ENCODE measurements at regions of chr14 and their contacts with region 1.

Region 1: DNA sequence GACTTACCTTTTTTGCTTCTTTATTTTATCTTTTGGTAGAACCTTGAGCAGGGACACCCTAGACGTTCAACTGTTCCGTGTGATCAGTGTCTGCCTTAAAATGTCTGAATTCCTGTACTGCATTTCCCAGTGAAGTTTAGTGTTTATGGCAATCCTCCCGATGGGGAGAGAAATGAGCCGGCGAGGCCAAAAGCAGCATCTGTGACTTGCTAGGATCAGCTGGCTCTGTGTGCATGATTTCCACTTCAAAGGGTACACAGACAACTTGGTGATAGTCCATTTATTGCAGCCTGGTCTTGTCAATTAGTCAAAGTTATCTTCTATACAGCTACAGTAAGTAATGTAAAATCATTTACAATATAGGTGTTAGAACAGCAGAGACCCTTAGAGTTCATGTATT is 768.5 kb downstream of the DIO2 start:
- DNase-seq: no peak
- H3K4me3 ChIP-seq: no peak overlapping the region
- H3K27ac ChIP-seq: no peak overlapping the region
- H3K4me1 ChIP-seq: no peaks in the 10 kb centered on the region
- H3K27me3 ChIP-seq: peaks cover 15% of the 10 kb centered on the region
- CTCF ChIP-seq: no peak

Region 2: DNA sequence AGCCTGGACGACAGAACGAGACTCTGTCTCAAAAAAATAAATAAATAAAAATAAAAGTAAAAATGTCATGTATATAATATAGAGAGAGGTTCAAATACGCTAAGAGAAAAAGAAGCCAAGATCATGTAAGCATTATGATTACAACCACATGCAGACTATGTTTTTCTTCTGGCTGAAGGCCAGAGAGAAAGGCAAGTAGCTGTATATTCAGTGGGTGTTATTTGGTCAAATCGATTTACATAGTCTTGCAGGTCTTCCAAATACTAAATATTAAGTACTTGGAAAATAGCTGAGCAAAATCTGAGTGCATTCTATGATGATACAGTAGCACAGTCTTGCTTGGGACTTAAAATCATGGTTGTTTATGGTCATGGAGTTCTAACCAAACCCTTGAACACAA is 10.5 kb after region 1 on chr14:
- CTCF ChIA-PET with region 1: no interaction called
- POLR2A ChIA-PET with region 1: no interaction called
- intact Hi-C with region 1: no loop called
- DNase-seq: no peak
- H3K4me3 ChIP-seq: no peak overlapping the region
- H3K27ac ChIP-seq: no peak overlapping the region
- H3K4me1 ChIP-seq: no peaks in the 10 kb centered on the region
- H3K27me3 ChIP-seq: no peaks in the 10 kb centered on the region
- CTCF ChIP-seq: no peak

Region 3: DNA sequence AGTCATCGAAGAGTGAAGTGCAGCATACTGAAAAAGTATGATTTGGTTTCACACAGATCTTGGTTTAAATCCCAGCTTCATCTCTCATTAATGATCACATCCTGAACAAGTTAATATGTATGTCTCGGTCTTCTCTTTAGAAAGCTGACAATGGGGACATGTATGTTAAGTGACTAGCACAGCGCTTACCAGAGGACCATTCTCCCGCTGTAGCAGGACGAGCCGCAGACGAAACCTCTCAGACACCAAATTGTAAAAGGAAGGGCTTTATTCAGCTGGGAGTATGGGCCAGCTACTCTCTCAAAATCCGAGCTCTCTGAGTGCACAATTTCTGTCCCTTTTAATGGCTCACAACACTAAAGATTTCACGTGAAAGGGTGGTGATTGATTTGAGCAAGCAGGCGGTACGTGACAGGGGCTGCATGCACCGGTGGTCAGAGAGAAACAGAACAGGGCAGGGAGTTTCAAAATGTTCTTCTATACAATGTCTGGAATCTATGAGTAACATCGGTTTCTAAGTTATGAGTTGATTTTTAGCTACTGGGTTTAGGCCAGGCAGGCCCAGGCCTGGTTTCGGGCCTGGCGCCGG is 86.1 kb after region 1 on chr14:
- CTCF ChIA-PET with region 1: interaction called, 12 read pairs
- POLR2A ChIA-PET with region 1: no interaction called
- intact Hi-C with region 1: no loop called
- DNase-seq: no peak
- H3K4me3 ChIP-seq: no peak overlapping the region
- H3K27ac ChIP-seq: no peak overlapping the region
- H3K4me1 ChIP-seq: no peaks in the 10 kb centered on the region
- H3K27me3 ChIP-seq: no peaks in the 10 kb centered on the region
- CTCF ChIP-seq: no peak

Measured in A673 (cell line).